Activated CD4-positive, alpha-beta T cell treated with anti-CD3 and anti-CD28 coated beads for 36 hours (primary cell): ENCODE measurements at regions of chr2 and their contacts with region 1.

Region 1: DNA sequence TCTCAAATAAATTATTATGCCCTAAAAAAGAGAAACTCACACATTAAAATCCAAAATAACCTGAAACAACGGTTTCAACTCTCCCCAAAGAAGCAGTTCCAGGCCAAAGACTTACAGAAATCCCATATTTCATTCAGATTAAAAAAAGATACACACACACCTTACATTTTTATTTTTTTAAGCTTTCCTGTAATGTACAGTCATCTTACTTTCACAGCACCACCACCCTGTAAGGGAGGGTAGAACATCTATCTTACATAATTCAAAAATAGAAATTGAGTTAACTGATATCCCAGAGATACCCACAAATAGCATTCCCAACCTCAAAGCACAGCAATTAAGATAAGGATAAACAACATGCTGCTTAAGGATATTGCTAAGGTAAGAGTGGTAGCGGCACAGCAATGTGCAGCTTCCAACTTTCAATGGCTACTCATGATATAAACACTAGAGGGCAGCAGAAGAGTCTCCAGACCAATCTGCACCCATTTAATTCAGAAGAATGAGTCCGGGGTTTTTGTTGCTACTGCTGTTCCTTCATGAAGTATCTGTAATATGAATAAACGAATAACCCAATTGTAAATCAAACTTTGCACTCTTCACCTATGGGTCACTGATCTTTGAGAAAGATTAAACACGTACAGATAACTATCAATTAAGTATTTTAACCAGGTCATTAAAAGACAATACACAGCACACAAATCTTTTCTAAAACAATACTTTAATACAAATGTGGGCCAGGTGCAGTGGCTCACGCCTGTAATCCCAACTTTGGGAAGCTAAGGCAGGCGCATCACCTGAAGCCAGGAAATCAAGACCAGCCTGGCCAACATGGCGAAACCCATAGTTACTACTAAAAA is 11.3 kb downstream of the GFPT1 start:
- DNase-seq: no peak
- ATAC-seq: peak; percentile 85
- H3K4me3 Mint-ChIP-seq: no peak overlapping the region
- H3K27ac Mint-ChIP-seq: peak overlapping the region; percentile 1
- H3K4me1 Mint-ChIP-seq: peaks cover 15% of the 10 kb centered on the region
- H3K27me3 Mint-ChIP-seq: no peaks in the 10 kb centered on the region

Region 2: DNA sequence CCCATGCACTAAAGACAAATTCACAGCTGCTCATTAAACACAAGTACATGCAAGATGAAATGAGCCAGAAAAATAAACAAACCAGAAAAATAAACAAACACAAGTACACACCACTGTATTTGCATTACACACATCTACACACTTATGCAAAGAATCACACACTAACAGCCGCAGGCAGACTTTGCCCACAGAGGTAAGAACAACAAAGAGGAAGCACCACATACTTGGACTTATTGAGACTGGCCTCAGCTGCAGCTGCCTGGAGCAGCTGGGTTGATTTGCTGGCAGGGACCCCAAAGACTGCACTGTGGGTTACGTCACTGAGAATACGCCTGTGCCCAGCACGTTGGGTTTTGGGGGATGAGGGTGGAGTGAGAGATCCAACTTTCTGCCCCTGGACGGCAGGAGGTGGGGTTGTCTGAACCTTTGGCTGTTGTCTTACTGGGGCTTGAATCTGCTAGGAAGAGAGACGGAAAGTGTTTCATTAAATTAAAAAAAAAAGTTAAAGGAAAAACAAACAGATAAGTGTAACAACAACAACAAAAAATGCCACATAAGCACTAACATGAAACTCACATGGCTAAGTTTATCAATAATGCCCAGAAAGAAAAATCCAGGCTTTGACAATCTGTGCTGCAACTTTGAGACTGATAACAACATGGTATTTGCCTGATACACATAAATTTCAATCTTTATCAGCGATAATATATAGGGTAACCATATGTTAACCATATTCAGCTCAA is 133.5 kb after region 1 on chr2:
- CTCF ChIA-PET with region 1: interaction called, 3 read pairs
- POLR2A ChIA-PET with region 1: no interaction called
- intact Hi-C with region 1: loop called in 1 of 2 experiments (anchors 5 kb)
- DNase-seq: no peak
- ATAC-seq: no peak
- H3K4me3 Mint-ChIP-seq: no peak overlapping the region
- H3K27ac Mint-ChIP-seq: peak overlapping the region; percentile 82
- H3K4me1 Mint-ChIP-seq: peaks cover 39% of the 10 kb centered on the region
- H3K27me3 Mint-ChIP-seq: no peaks in the 10 kb centered on the region